ENCODE measurements at regions of chr4 and their contacts with region 1.

Region 1: DNA sequence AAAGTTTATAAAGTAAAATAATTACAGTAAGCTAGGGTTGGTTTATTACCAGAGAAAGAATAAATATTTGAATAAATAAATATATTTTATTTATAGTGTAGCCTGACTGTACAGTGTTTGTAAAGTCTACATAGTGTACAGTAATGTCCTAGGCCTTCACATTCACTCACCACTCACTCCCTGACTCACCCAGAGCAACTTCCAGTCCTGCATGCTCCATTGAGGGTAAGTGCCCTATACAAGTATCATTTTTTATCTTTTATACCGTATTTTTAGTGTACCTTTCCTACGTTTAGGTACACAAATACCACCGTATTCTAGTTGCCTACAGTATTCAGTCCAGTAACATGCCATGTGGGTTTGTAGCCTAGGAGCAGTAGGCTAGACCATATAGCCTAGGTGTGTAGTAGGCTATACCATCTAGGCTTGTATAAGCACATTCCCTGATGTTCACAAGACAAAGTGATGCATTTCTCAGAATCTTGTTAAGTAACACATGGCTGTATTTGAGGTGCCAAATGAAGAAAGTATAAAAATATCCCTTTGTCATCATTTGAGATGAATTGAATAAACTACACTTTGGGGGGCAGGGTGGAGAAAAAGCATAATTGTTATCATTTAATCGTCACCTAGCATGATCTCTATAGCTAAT is 14.7 kb upstream of the KLHL8 start:
- DNase-seq: no peak
- H3K4me3 ChIP-seq: peak overlapping the region; percentile 43 to 52
- H3K27ac ChIP-seq: peak overlapping the region in 1 of 2 donors; percentile 52
- H3K4me1 ChIP-seq: peaks cover 0 to 3% (median 1%) of the 10 kb centered on the region in 4 donors
- H3K27me3 ChIP-seq: no peaks in the 10 kb centered on the region
- CTCF ChIP-seq: no peak

Region 2: DNA sequence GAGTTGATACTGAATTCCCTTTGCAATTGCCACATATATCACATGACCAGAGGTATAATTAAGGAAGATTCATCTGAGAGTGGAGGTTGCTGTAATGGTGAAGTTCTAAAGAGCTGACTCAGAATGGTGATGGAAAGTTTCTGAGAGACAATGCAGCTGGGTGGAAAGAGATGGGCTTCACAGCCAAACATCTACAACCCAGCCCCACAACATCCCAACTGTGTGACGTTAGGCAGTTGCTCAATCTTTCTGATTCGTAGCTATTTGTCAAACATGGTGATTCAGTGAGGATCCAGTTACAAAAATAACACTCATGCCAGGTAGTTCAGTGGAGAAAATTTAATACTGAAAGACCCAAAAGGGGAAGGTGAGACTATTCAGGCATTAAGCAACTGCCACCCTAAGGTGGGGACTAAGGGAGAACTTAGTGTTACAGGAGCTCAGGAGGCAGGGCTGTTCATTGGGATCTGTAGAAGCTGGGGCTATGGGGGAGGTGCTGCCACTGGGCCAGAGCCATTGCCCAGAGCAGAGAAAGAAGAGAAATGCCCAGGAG is 307.2 kb before region 1 on chr4:
- intact Hi-C with region 1: loop called (anchors 5 kb)
- DNase-seq: peak in 1 of 2 donors; percentile 63
- H3K4me3 ChIP-seq: no peak overlapping the region
- H3K27ac ChIP-seq: peak overlapping the region; percentile 16 to 23
- H3K4me1 ChIP-seq: no peaks in the 10 kb centered on the region
- H3K27me3 ChIP-seq: no peaks in the 10 kb centered on the region
- CTCF ChIP-seq: no peak

Region 3: DNA sequence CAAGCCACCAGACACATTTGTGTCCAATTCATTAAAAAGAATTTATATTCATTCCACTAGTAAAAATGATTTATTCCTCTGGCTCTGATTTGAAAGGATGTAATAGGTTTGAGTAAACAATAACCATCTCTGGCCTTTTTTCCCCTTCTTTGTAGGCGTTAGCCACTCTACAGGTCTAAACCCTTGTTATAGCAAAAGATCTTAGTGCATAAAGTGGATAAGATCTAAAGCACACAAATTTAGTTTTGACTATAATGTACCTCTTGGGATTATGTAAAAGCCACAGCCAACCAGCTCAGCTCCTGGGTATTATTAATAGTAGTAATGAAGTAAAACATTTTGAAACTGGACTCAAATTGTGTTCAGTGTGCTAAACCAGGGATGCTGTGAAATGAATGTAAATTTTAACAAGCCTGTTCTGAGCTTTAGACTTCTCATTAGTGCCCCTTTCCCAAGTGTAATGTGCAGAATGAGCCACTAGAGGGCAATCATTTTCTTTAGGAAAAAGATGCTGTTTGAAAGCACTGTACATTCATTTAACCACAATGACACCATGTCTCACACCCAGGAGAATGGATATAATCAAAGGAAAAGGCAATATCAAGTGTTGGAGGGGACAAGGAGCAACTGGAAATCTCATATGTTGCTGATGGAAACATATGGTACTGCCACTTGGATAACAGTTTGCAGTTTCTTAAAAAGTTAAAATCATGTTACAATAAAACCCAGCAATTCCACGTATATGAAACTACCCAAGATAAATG is 84.5 kb before region 1 on chr4:
- intact Hi-C with region 1: loop called (anchors 5 kb)
- DNase-seq: peak in 1 of 2 donors; percentile 29
- H3K4me3 ChIP-seq: no peak overlapping the region
- H3K27ac ChIP-seq: no peak overlapping the region
- H3K4me1 ChIP-seq: peaks cover 0 to 5% (median 0%) of the 10 kb centered on the region in 4 donors
- H3K27me3 ChIP-seq: no peaks in the 10 kb centered on the region
- CTCF ChIP-seq: peak; percentile 89 to 90

Region 4: DNA sequence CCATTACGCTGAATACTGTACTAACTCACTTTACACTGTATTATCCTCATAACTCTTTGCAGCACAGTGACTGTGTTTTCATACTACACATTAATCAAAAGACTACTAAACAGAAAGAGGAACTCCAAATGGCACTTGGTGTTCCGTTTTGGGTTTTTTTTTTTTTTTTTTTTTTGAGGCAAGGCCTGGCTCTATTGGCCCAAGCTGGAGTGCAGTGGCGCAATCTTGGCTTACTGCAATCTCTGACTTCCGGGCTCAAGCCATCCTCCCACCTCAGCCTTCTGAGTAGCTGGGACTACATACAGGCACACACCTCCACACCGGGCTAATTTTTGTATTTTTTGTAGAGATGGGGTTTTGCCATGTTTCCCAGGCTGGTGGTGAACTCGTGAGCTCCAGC is 25.4 kb before region 1 on chr4:
- intact Hi-C with region 1: no loop called
- DNase-seq: peak; percentile 57 to 72
- H3K4me3 ChIP-seq: no peak overlapping the region
- H3K27ac ChIP-seq: no peak overlapping the region
- H3K4me1 ChIP-seq: peaks cover 0 to 29% (median 4%) of the 10 kb centered on the region in 4 donors
- H3K27me3 ChIP-seq: no peaks in the 10 kb centered on the region
- CTCF ChIP-seq: no peak